ENCODE measurements at regions of chr5 and their contacts with region 1.

Region 1: GRCh38 chr5:142548739-142549275 is 137.1 kb downstream of the FGF1 start:
- DNase-seq: peak; percentile 97
- ATAC-seq: peak; percentile 92
- H3K4me3 ChIP-seq: no peak overlapping the region
- H3K27ac ChIP-seq: no peak overlapping the region
- H3K4me1 ChIP-seq: peaks cover 17% of the 10 kb centered on the region
- H3K27me3 ChIP-seq: no peaks in the 10 kb centered on the region
- CTCF ChIP-seq: peak; percentile 99
- POLR2A ChIP-seq: 0 out of 2 replicates have a peak, but pooled peaks have one; percentile 40
- RAD21 ChIP-seq: peak; percentile 99

Region 2: GRCh38 chr5:141992349-141992963 is 556.4 kb before region 1 on chr5:
- CTCF ChIA-PET with region 1: no interaction called
- POLR2A ChIA-PET with region 1: no interaction called
- dilution Hi-C with region 1: no loop called
- in situ Hi-C with region 1: loop called (anchors 10 kb)
- intact Hi-C with region 1: no loop called
- DNase-seq: peak; percentile 62
- ATAC-seq: peak; percentile 69
- H3K4me3 ChIP-seq: no peak overlapping the region
- H3K27ac ChIP-seq: no peak overlapping the region
- H3K4me1 ChIP-seq: no peaks in the 10 kb centered on the region
- H3K27me3 ChIP-seq: no peaks in the 10 kb centered on the region
- CTCF ChIP-seq: peak; percentile 70
- POLR2A ChIP-seq: no peak
- RAD21 ChIP-seq: peak; percentile 61

Region 3: GRCh38 chr5:142024771-142025304 is 524.0 kb before region 1 on chr5:
- CTCF ChIA-PET with region 1: no interaction called
- POLR2A ChIA-PET with region 1: no interaction called
- dilution Hi-C with region 1: no loop called
- in situ Hi-C with region 1: no loop called
- intact Hi-C with region 1: no loop called
- DNase-seq: peak; percentile 80
- ATAC-seq: peak; percentile 100
- H3K4me3 ChIP-seq: peak overlapping the region; percentile 71
- H3K27ac ChIP-seq: peak overlapping the region; percentile 99
- H3K4me1 ChIP-seq: no peaks in the 10 kb centered on the region
- H3K27me3 ChIP-seq: peaks cover 5% of the 10 kb centered on the region
- CTCF ChIP-seq: no peak
- POLR2A ChIP-seq: no peak
- RAD21 ChIP-seq: no peak

Region 4: DNA sequence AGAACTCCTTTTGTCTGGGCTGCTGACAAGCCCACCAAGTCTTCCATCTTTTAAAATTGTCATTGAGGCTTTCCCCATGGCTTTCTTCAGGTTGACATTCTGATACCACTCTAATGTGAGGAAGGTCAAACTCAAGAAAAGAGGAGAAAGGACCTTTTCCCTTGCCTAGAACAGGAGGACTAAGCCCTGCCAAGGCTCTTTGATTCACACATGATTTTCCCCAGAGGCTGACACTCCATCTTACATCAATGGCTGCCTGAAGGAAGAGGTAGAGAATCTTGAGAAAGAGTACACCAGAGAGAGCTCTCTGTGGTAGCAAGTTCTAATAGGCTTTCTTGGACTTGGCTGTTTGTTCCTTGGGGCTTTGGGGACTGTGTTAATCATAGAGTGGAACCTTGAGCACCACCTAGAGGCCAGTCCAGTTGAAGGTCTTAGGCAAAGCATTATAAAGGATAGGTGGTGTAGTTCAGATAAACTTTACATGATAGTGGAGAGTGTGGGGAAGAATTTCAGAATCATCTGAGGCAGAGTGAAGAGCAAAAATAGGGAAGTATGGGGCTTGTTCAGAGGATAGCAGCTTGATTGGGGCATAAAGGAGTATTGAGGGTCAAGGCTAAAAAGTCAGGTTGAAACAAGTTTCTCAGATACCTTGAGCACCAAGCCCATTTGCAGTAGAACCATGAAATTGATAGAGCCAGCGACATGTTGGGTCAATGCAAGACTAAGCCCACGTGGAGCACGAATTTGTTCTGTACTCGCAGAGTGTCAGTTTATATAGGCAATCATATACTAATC is 403.5 kb before region 1 on chr5:
- CTCF ChIA-PET with region 1: interaction called, 4 read pairs
- POLR2A ChIA-PET with region 1: no interaction called
- dilution Hi-C with region 1: loop called (anchors 25 kb)
- in situ Hi-C with region 1: no loop called
- intact Hi-C with region 1: no loop called
- DNase-seq: peak; percentile 68
- ATAC-seq: peak; percentile 97
- H3K4me3 ChIP-seq: no peak overlapping the region
- H3K27ac ChIP-seq: no peak overlapping the region
- H3K4me1 ChIP-seq: no peaks in the 10 kb centered on the region
- H3K27me3 ChIP-seq: no peaks in the 10 kb centered on the region
- CTCF ChIP-seq: peak; percentile 68
- POLR2A ChIP-seq: no peak
- RAD21 ChIP-seq: peak; percentile 52

Region 5: DNA sequence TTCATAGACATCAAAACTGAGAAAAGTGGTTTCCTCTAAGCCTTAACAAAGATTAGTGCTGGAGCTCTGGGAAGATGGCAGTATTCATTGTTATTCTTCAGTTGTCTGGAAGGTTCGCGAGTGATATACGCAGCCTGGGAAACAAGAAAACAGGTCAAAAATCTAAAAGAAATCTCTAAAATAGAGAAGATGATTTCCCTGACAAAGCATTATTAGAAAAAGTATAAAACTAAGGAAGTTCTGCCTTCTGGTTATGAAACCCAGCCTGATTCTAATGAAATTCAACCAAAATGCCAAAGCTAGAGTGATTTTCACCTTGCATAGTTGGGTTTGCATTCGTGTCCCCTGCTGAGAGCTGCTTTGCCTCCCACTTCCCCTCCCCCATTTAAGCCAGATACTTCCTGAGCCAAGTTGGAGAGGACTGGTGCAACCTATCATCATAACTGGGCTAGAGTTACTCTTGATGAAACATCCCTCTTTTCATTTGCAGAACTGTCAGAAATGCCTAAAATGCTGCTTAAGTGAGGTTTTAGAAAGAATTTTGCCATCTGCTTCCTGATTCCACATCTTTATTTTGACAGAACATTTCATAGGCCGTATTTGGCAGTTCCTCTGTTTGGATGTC is 391.9 kb before region 1 on chr5:
- CTCF ChIA-PET with region 1: interaction called, 11 read pairs
- POLR2A ChIA-PET with region 1: no interaction called
- dilution Hi-C with region 1: no loop called
- in situ Hi-C with region 1: loop called (anchors 5 kb)
- intact Hi-C with region 1: loop called (anchors 1 kb)
- DNase-seq: no peak
- ATAC-seq: no peak
- H3K4me3 ChIP-seq: no peak overlapping the region
- H3K27ac ChIP-seq: no peak overlapping the region
- H3K4me1 ChIP-seq: peaks cover 3% of the 10 kb centered on the region; the same call in 1 of the 2 replicates
- H3K27me3 ChIP-seq: no peaks in the 10 kb centered on the region
- CTCF ChIP-seq: no peak
- POLR2A ChIP-seq: no peak
- RAD21 ChIP-seq: no peak

Region 6: GRCh38 chr5:142281966-142282365 is 266.8 kb before region 1 on chr5:
- CTCF ChIA-PET with region 1: no interaction called
- POLR2A ChIA-PET with region 1: interaction called, 11 read pairs
- dilution Hi-C with region 1: no loop called
- in situ Hi-C with region 1: no loop called
- intact Hi-C with region 1: no loop called
- DNase-seq: no peak
- ATAC-seq: no peak
- H3K4me3 ChIP-seq: no peak overlapping the region
- H3K27ac ChIP-seq: no peak overlapping the region
- H3K4me1 ChIP-seq: peaks cover 4% of the 10 kb centered on the region; the same call in 1 of the 2 replicates
- H3K27me3 ChIP-seq: no peaks in the 10 kb centered on the region
- CTCF ChIP-seq: no peak
- POLR2A ChIP-seq: no peak
- RAD21 ChIP-seq: no peak

Region 7: DNA sequence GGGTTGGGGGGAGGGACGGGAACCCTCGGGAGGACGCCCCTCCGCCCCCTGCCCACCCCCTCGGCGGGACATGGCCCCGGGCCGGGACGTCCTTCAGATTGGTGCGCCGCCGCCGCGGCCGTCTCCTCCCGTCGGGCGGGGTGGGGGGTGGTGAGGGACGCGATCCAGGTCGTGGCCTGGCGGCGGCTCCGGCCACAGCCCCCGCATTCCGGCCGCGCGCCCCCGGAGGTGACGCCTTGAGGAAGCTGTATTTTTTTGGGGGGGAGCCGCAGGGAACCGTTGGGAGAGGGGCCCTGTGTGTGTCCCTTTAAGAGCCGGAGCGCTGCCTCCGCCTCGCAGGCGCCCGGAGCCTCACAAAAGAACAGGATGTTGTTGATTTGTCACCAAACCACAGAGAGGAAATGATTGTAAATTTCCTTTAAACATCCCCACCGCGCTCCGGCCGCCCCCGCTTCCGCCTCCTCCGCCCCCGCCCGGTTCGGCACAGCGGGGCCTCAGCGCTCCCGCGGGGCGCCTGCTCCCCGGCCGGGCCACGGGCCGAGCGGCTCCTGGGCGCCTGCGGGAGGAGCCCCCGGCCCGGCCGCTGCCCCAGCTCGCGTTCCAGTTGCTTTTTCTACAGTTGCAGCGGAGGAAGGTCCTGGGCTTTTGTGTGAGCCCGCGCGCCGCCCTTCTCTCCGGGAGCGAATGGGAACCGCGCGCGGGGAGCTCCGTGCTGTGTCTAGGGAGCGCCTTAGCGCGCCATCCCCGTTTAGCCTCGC is 191.9 kb before region 1 on chr5:
- CTCF ChIA-PET with region 1: interaction called, 6 read pairs
- POLR2A ChIA-PET with region 1: no interaction called
- dilution Hi-C with region 1: no loop called
- in situ Hi-C with region 1: no loop called
- intact Hi-C with region 1: loop called (anchors 2 kb)
- DNase-seq: peak; percentile 92
- ATAC-seq: peak; percentile 87
- H3K4me3 ChIP-seq: peak overlapping the region; percentile 46
- H3K27ac ChIP-seq: peak overlapping the region; percentile 95
- H3K4me1 ChIP-seq: peaks cover 12% of the 10 kb centered on the region
- H3K27me3 ChIP-seq: no peaks in the 10 kb centered on the region
- CTCF ChIP-seq: 0 out of 2 replicates have a peak, but pooled peaks have one; percentile 9
- POLR2A ChIP-seq: peak; percentile 83
- RAD21 ChIP-seq: no peak; the same call in 1 of the 2 replicates

Region 8: DNA sequence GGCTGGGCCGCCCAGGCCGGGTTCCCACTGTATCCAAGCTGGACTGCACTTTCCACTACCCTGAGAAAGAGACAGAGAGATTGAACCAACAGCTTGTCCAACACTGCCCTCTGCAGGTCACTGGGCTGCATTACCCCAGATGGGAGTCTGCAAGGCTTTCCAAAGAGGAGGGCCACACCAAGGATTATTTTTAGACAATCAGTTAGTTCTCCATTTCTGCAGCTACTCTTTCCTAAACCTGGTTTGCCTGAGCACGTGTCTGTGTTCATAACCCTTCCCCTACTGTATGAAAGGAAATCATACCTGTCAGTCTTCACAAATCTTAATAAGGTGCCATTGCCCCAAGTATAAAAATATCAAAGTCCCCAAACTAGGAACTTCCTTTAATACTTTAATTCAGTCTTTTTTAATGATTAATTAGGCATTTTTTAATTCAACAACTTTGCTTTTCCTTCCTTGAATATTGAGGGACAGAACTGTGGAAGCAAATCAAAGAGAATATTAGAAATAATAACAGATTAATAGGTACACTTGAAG is 150.4 kb after region 1 on chr5:
- CTCF ChIA-PET with region 1: no interaction called
- POLR2A ChIA-PET with region 1: no interaction called
- dilution Hi-C with region 1: no loop called
- in situ Hi-C with region 1: no loop called
- intact Hi-C with region 1: loop called (anchors 1 kb)
- DNase-seq: peak; percentile 84
- ATAC-seq: peak; percentile 98
- H3K4me3 ChIP-seq: no peak overlapping the region
- H3K27ac ChIP-seq: no peak overlapping the region
- H3K4me1 ChIP-seq: peaks cover 10% of the 10 kb centered on the region
- H3K27me3 ChIP-seq: no peaks in the 10 kb centered on the region
- CTCF ChIP-seq: peak; percentile 99
- POLR2A ChIP-seq: peak; percentile 69
- RAD21 ChIP-seq: peak; percentile 100

Region 9: DNA sequence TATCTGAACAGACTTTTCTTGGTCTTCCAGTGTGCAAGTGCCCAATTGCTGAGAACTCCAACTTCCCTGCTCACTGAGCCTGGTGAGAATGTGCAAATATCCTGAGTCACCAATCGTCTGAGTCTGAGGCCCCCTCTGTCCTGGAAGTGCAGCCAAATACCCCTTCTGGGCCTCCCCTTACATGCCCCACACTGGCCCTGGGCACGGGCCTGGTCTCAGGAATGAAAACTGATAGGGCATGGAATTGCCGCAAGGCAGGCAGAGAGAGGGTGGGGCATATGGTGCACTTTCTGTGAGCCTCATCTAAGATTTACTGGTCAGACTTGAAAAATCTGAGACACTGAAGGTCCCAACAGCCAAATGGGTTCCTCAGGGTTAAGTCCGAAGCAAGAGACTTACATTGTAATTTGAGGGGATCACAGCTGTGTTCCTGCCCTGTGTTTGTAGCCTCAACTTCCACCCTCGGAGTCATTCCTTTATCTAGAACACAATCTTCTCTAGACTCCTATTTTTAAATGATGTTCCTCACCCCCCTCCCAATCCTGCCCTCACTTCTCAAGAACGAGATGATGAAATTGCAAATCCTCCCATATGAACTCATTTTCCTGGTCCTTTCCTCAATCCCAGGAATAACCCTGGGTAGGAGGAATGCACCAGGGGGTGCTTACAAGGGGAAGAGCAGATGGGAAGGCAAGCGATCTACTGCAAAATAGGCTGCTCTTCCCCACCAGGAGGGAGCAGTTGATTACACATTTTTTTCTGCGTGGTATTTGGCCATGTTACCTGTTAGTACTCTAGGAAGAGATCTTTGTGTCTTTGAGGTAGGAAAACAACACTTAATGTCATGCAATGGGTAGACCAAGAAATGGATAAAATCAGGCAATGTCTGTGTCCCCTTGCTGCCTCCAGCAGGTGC is 186.8 kb after region 1 on chr5:
- CTCF ChIA-PET with region 1: no interaction called
- POLR2A ChIA-PET with region 1: no interaction called
- dilution Hi-C with region 1: no loop called
- in situ Hi-C with region 1: no loop called
- intact Hi-C with region 1: no loop called
- DNase-seq: no peak
- ATAC-seq: no peak
- H3K4me3 ChIP-seq: no peak overlapping the region
- H3K27ac ChIP-seq: no peak overlapping the region
- H3K4me1 ChIP-seq: no peaks in the 10 kb centered on the region
- H3K27me3 ChIP-seq: peaks cover 28% of the 10 kb centered on the region
- CTCF ChIP-seq: no peak
- POLR2A ChIP-seq: no peak
- RAD21 ChIP-seq: no peak

Measured in IMR-90 (cell line).